Pancreas (tissue), 10 donors: ENCODE measurements at regions of chr3 and their contacts with region 1.

Region 1: GRCh38 chr3:154252759-154253638 is 71.3 kb downstream of the DHX36 start:
- DNase-seq: peak; percentile 77 to 97 (median 90)
- ATAC-seq: peak; percentile 96 to 100 (median 98)
- H3K4me3 ChIP-seq: no peak overlapping the region
- H3K27ac ChIP-seq: no peak overlapping the region
- H3K4me1 ChIP-seq: peaks cover 0 to 6% (median 0%) of the 10 kb centered on the region in 3 donors
- H3K27me3 ChIP-seq: no peaks in the 10 kb centered on the region
- CTCF ChIP-seq: peak; percentile 65 to 83 (median 74)

Region 2: DNA sequence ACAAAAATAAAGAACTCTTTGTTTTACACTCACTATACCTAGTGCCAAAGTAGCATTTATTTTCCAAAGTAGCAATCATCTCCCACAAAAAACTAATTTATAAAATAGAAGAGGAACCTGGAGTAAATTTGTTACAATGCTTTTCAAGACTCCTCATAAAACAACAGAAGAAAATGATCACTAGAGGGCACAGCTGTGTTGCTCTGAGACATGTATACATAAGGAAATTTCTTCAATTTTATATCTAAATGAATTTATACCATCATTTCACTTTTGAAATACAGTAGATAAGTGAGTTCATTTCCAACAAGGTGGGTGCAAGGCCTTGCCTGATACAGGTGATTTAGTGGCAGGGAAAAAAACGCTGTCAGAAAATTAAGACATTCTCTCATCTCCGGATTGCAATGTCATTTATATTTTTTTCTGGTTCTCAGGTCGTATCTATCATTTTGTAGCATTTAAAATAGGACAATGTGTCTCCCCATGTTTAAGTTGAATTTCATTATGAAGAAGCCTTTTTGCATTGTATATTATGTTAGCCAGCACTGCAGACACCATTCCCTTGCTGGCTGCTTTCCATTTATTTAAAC is 157.1 kb before region 1 on chr3:
- intact Hi-C with region 1: loop called in 2 of 3 experiments (anchors 5 kb)
- DNase-seq: no peak
- ATAC-seq: peak in 3 of 4 donors; percentile 50 to 56 (median 50)
- H3K4me3 ChIP-seq: no peak overlapping the region
- H3K27ac ChIP-seq: no peak overlapping the region
- H3K4me1 ChIP-seq: no peaks in the 10 kb centered on the region
- H3K27me3 ChIP-seq: no peaks in the 10 kb centered on the region
- CTCF ChIP-seq: peak in 3 of 4 donors; percentile 12 to 31 (median 27)